CD4-positive, alpha-beta memory T cell (primary cell): ENCODE measurements at regions of chr9 and their contacts with region 1.

Region 1: GRCh38 chr9:70413798-70414775 is at the start of gene KLF9:
- DNase-seq: peak; percentile 95 to 97 (median 96)
- H3K4me3 ChIP-seq: peak within 1 kb of the TSS in 1 of 2 donors; percentile 95
- H3K4me3 Mint-ChIP-seq: peak within 1 kb of the TSS; percentile 94 to 100 (median 96)
- H3K27ac ChIP-seq: peak within 1 kb of the TSS; percentile 98
- H3K27ac Mint-ChIP-seq: peak within 1 kb of the TSS; percentile 99 to 100 (median 100)
- H3K4me1 ChIP-seq: peaks cover 50% of the 10 kb centered on the region
- H3K4me1 Mint-ChIP-seq: peaks cover 28 to 63% (median 45%) of the 10 kb centered on the region in 4 donors
- H3K27me3 ChIP-seq: no peaks in the 10 kb centered on the region
- H3K27me3 Mint-ChIP-seq: peaks cover 0 to 2% of the 10 kb centered on the region in 2 donors
- total RNA-seq, gene KLF9: 18.6 to 20.6 TPM

Region 2: DNA sequence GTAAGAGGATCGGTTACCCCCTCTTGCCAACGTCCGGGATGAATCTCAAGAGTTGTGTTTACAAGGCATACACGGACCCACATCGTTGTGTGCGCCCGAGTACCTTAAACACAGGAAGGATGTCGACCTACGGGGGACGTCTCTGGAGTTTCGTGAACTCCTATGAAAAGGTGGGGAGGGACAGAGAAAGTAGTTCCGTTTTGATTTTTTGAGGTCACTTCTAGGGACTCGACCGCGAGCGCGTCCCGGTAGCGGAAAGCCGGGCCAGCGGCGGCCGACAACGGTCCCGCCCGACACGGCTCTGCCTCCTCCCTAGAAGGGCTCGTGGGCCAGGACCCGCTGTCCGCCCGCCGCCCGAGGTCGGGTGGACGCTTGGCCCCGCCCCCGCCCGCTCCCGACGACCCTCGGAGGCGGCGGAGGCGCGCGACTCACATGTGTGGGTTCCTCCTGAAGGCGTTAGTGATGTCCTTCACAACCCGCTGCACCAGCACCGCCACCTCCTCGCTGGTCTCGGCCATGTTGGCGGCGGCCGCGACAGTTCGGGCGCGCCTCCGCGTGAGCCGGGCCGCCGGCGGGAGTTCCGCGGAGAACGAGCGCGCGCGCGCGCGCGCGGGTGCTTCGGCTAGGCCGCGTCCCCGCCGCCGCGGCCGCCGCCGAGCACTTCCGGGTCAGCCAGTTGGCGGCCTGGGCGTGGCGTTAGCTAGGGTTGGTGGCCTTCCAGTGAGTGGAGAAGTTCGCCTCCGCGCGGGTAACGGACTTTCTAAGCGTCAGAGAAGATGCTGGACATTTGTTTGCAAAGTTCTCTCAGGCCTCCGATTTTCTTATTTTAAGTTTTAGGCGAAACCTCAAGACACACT is 654.4 kb before region 1 on chr9 and contains the start of gene PTAR1:
- CTCF ChIA-PET with region 1: no interaction called
- POLR2A ChIA-PET with region 1: interaction called, 3 read pairs
- intact Hi-C with region 1: loop called (anchors 5 kb)
- DNase-seq: peak; percentile 84 to 91 (median 88)
- H3K4me3 ChIP-seq: peak within 1 kb of the TSS; percentile 73 to 81
- H3K4me3 Mint-ChIP-seq: peak within 1 kb of the TSS; percentile 89 to 98 (median 96)
- H3K27ac ChIP-seq: peak within 1 kb of the TSS; percentile 85
- H3K27ac Mint-ChIP-seq: peak within 1 kb of the TSS; percentile 93 to 97 (median 95)
- H3K4me1 ChIP-seq: peaks cover 39% of the 10 kb centered on the region
- H3K4me1 Mint-ChIP-seq: peaks cover 21 to 47% (median 33%) of the 10 kb centered on the region in 4 donors
- H3K27me3 ChIP-seq: no peaks in the 10 kb centered on the region
- H3K27me3 Mint-ChIP-seq: no peaks in the 10 kb centered on the region
- total RNA-seq, gene PTAR1: 79.8 to 80.0 TPM

Region 3: DNA sequence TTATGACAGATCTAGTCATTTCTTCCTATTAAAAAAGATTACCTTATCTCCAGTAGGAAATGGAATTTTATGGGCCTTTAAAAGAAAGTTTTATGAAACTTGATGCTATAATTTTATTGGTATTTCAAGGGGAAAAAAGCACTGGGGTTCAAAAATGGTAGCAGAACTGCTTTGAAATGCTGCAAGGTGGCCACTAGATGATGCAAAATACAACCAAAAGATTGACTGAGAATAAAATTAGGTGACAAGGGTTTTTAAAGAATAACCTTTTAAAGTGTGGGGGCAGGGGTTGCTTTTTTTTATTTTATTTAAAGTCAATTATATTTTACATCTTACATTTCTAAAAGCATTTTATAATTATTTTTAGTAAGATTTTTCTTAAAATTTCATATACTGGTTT is 61.3 kb before region 1 on chr9:
- CTCF ChIA-PET with region 1: interaction called, 4 read pairs
- POLR2A ChIA-PET with region 1: interaction called, 5 read pairs
- intact Hi-C with region 1: loop called (anchors 2 kb)
- DNase-seq: peak in 4 of 5 donors; percentile 14 to 31 (median 24)
- H3K4me3 ChIP-seq: no peak overlapping the region
- H3K4me3 Mint-ChIP-seq: no peak overlapping the region
- H3K27ac ChIP-seq: no peak overlapping the region
- H3K27ac Mint-ChIP-seq: peak overlapping the region in 1 of 7 donors; percentile 11
- H3K4me1 ChIP-seq: no peaks in the 10 kb centered on the region
- H3K4me1 Mint-ChIP-seq: peaks cover 0 to 2% (median under 1%) of the 10 kb centered on the region in 4 donors
- H3K27me3 ChIP-seq: no peaks in the 10 kb centered on the region
- H3K27me3 Mint-ChIP-seq: no peaks in the 10 kb centered on the region

Region 4: GRCh38 chr9:70398145-70398556 is 15.9 kb before region 1 on chr9:
- CTCF ChIA-PET with region 1: interaction called, 13 read pairs
- POLR2A ChIA-PET with region 1: interaction called, 104 read pairs
- intact Hi-C with region 1: loop called (anchors 1 kb)
- DNase-seq: peak; percentile 42 to 56 (median 54)
- H3K4me3 ChIP-seq: peak overlapping the region in 1 of 2 donors; percentile 0
- H3K4me3 Mint-ChIP-seq: peak overlapping the region; percentile 60 to 81 (median 76)
- H3K27ac ChIP-seq: peak overlapping the region; percentile 46
- H3K27ac Mint-ChIP-seq: peak overlapping the region; percentile 53 to 92 (median 78)
- H3K4me1 ChIP-seq: peaks cover 83% of the 10 kb centered on the region
- H3K4me1 Mint-ChIP-seq: peaks cover 53 to 82% (median 68%) of the 10 kb centered on the region in 4 donors
- H3K27me3 ChIP-seq: no peaks in the 10 kb centered on the region
- H3K27me3 Mint-ChIP-seq: no peaks in the 10 kb centered on the region

Region 5: GRCh38 chr9:70563431-70564204 is 149.5 kb after region 1 on chr9:
- CTCF ChIA-PET with region 1: interaction called, 4 read pairs
- POLR2A ChIA-PET with region 1: interaction called, 13 read pairs
- intact Hi-C with region 1: no loop called
- DNase-seq: peak; percentile 56 to 72 (median 60)
- H3K4me3 ChIP-seq: peak overlapping the region in 1 of 2 donors; percentile 6
- H3K4me3 Mint-ChIP-seq: peak overlapping the region; percentile 39 to 78 (median 66)
- H3K27ac ChIP-seq: peak overlapping the region; percentile 12
- H3K27ac Mint-ChIP-seq: peak overlapping the region; percentile 74 to 97 (median 95)
- H3K4me1 ChIP-seq: peaks cover 29% of the 10 kb centered on the region
- H3K4me1 Mint-ChIP-seq: peaks cover 25 to 34% (median 28%) of the 10 kb centered on the region in 4 donors
- H3K27me3 ChIP-seq: no peaks in the 10 kb centered on the region
- H3K27me3 Mint-ChIP-seq: no peaks in the 10 kb centered on the region

Region 6: GRCh38 chr9:71795097-71795813 is 1381.2 kb after region 1 on chr9:
- CTCF ChIA-PET with region 1: no interaction called
- POLR2A ChIA-PET with region 1: interaction called, 4 read pairs
- intact Hi-C with region 1: loop called (anchors 10 kb)
- DNase-seq: peak; percentile 47 to 81 (median 74)
- H3K4me3 ChIP-seq: peak overlapping the region; percentile 10 to 14
- H3K4me3 Mint-ChIP-seq: peak overlapping the region; percentile 61 to 79 (median 70)
- H3K27ac ChIP-seq: peak overlapping the region; percentile 49
- H3K27ac Mint-ChIP-seq: peak overlapping the region; percentile 85 to 97 (median 92)
- H3K4me1 ChIP-seq: peaks cover 74% of the 10 kb centered on the region
- H3K4me1 Mint-ChIP-seq: peaks cover 39 to 68% (median 57%) of the 10 kb centered on the region in 4 donors
- H3K27me3 ChIP-seq: no peaks in the 10 kb centered on the region
- H3K27me3 Mint-ChIP-seq: no peaks in the 10 kb centered on the region